Left cardiac atrium (tissue), 4 donors: ENCODE measurements at regions of chr21 and their contacts with region 1.

Region 1: GRCh38 chr21:42164064-42164789 is 54.7 kb upstream of the ABCG1 start:
- DNase-seq: peak; percentile 60
- ATAC-seq: peak; percentile 85 to 87

Region 2: DNA sequence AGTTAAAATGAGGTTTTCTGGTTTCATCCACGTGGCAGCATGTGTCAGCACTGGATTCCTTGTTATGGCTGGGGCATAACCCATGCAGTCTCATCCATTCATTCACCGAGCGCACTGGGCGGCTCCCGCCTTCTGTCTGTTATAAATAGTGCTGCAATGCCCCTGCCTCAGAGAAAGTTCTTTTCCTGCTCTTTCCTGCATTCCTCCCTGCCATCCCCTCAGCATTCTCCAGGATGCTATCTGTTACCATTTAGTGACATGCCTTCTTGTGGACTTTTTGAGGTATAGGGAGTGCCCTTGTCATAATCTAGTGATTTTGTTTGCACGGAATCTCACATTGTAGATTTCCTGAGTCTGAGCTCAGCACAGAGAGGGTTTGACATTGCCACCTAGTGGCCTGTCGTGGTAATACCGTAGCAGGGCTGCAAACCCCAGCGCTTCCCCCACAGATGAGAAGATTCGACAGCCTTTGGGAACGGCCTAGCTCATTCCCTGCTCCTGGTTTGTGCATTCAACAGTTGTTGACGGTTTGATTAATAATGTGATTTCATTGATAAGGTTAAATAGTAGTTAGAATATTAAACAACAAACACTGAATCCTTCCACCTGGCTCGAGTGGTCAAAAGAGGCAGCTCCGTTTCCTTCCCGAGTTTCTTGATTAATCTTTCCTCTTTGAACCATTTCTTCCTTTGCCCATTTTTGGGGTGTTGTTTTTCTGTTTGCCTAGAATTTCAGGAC is 46.8 kb before region 1 on chr21:
- intact Hi-C with region 1: no loop called
- DNase-seq: peak; percentile 74
- ATAC-seq: peak; percentile 84 to 86

Region 3: DNA sequence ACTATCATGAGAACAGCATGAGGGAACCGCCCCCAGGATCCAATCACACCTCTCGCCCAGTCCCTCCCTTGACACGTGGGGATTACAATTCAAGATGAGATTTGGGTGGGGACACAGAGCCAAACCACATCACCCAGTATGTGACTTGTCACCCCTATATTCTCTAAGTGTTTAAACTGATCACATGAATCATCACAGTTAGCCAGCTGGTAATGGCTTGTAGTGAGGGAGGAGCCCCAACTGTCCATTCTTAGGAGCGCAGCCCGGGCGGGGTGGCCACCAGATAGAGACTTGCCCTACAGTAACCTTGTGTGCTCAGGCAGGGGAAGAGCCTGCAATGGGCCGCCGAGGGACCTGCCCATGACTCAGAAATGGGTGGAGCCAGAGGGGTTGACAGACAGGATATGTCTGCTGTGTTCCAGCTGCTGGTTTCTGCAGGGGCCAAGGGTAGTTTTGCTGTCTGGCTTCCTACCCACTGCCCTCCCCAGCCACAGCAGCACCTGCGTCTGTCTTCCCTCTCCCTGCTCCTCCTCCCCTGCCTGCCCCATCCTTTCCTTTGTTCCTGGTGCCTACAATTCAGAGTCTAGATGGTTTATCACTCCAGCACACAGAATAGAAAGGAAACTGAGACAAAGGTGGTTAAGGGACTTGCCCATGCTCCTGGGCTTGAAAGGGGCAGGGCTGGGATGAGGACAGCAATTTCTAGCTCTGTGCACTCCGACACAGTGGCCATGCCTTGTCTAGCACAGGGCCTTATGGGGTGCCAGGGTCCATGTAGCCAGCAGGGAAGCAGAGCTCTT is 63.9 kb after region 1 on chr21:
- intact Hi-C with region 1: no loop called
- DNase-seq: peak; percentile 92
- ATAC-seq: peak; percentile 89 to 99

Region 4: DNA sequence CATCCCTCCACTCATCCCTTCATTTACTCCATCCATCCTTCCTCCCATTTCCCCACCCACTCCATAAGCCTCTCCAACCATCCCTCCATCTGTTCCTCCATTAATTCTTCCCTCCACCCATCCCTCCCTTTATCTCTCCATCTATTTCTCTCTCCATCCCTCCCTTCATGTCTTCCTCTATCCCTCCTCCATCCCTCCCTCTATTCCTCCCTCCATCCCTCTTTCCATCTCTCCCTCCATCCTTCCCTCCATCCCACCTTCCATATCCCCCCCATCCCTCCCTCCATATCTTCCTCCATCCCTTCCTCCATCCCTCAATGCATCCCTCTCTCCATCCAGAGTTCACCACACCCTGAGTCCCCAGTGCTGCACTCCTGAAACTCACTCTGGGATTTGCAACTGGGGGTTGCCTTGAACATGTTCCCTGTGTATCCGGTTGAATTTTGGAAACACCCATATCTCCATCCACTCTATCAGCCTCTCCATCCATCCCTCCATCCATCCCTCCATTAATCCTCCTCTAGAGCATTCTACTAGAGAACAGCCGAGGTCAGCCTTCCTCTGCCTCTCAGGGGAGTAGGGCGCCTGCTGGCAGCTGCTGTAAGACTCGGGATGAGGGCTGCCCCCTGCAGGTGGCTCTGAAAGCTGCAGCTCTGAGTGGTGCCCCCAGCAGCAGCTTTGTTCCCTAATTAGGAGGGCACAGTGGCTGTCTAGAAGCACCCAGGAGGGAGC is 94.1 kb after region 1 on chr21:
- intact Hi-C with region 1: loop called in 1 of 2 experiments (anchors 5 kb)
- DNase-seq: peak; percentile 65
- ATAC-seq: peak; percentile 63